ENCODE measurements at regions of chr1 and their contacts with region 1.

Region 1: DNA sequence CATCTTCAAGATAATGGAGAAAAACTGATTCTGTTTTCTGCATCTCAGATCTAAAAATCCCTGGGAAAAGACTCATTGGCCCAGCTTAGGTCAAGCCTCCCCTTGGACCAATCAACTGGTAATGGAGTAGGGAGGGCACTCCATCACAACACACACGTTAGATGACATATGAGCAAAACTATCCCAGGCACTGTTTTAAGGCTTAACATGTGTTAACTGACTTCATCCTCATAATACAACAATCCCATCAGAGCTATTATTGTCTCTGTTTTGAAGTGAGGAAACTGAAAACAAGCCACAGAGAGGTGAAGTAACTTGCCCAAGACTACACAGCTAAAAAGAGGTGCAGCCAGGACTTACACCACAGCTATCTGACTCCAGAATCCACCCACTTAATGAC is 14.7 kb upstream of the CITED4 start:
- DNase-seq: no peak
- ATAC-seq: no peak
- H3K4me3 Mint-ChIP-seq: no peak overlapping the region
- H3K27ac Mint-ChIP-seq: peak overlapping the region; percentile 43
- H3K4me1 Mint-ChIP-seq: peaks cover 45% of the 10 kb centered on the region
- H3K27me3 Mint-ChIP-seq: no peaks in the 10 kb centered on the region

Region 2: DNA sequence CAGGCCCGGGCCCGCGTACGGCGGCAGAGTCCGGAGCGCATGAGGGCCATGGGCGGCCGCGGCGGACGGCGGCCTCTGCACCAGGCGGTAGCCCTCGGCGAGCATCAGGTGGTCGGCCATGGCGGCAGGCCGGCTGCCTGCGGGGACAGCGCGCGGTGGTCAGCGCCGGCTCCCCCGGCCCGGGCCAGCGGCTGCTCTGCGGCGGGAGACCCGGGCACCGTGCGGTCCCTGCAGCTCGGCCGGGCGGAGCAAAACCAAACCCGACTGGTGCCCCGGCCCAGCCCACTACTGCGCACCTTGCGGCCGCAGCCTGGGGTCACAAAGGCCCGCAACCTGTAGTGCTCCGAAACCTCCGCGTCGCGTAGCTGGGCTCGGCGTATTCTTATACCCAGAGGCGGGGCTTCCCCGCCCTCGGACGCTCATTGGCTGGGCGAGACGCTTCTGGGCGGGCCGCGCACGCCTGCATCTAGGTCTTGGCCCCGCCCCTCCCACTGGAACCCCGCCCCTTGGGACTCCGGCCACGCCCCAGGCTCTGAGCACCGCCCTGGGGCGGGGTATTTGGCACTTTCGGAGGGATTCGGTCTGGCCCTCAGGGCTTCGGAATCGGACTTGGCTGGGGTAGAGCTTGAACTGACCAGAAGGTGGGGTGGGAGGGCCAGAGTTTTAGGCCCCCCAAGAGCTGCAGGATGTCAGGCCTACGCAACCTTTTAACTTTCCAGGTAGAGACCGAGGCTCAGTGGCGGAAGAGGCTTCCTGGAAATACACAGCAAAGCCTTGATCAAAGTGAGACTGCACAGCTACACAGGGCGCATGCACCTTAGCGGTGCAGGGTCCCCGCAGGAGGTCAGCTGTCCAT is 14.7 kb before region 1 on chr1 and contains the start of gene CITED4:
- CTCF ChIA-PET with region 1: interaction called, 10 read pairs
- POLR2A ChIA-PET with region 1: interaction called, 4 read pairs
- DNase-seq: peak; percentile 97
- ATAC-seq: peak; percentile 93
- H3K4me3 Mint-ChIP-seq: peak within 1 kb of the TSS; percentile 79
- H3K27ac Mint-ChIP-seq: peak within 1 kb of the TSS; percentile 96
- H3K4me1 Mint-ChIP-seq: peaks cover 30% of the 10 kb centered on the region
- H3K27me3 Mint-ChIP-seq: peaks cover 21% of the 10 kb centered on the region
- total RNA-seq, gene CITED4: 9.1 to 10.0 TPM

Region 3: DNA sequence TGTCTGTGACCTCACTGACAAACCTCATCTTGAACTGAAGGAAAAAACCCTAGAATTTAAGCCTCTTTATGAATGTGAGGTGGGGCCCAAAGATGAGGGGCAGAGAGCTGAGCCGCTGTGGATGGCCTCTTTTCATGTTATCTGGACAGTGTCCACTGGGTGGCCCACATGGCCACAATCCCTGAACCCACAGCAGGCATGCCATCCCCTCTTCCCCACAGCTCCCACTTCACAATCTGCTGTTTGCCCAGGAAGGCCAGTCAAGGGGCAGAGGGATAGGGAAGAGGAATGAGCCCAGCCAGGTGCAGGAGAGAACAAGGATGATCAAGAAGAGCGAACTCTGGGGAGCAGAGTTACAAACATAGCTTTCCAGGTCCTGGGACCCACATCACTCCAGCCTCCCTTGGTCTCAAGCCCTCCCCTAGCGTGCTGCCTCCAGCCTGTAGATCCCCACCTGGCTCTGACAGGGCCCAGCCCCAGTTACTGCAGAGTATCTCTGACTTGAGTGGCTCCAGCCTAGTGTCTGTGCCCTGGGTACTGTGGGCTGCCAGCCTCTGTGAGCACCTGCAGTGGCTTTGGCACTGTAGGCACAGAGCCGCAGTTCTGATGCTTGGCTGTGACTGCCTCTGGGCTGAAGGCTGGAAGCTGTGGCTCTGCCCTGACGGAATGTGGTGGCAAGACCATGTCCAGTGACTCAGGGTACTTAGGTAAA is 146.5 kb after region 1 on chr1:
- CTCF ChIA-PET with region 1: no interaction called
- POLR2A ChIA-PET with region 1: no interaction called
- DNase-seq: no peak
- ATAC-seq: no peak
- H3K4me3 Mint-ChIP-seq: no peak overlapping the region
- H3K27ac Mint-ChIP-seq: no peak overlapping the region
- H3K4me1 Mint-ChIP-seq: peaks cover 25% of the 10 kb centered on the region
- H3K27me3 Mint-ChIP-seq: no peaks in the 10 kb centered on the region